Activated CD4-positive, alpha-beta T cell treated with anti-CD3 and anti-CD28 coated beads for 36 hours (primary cell): ENCODE measurements at regions of chr4 and their contacts with region 1.

Region 1: GRCh38 chr4:183504064-183504929 is 561 bp upstream of the ING2 start:
- DNase-seq: peak; percentile 99
- ATAC-seq: peak; percentile 80
- H3K4me3 Mint-ChIP-seq: peak overlapping the region; percentile 85
- H3K27ac Mint-ChIP-seq: peak overlapping the region; percentile 95
- H3K4me1 Mint-ChIP-seq: peaks cover 33% of the 10 kb centered on the region
- H3K27me3 Mint-ChIP-seq: no peaks in the 10 kb centered on the region

Region 2: DNA sequence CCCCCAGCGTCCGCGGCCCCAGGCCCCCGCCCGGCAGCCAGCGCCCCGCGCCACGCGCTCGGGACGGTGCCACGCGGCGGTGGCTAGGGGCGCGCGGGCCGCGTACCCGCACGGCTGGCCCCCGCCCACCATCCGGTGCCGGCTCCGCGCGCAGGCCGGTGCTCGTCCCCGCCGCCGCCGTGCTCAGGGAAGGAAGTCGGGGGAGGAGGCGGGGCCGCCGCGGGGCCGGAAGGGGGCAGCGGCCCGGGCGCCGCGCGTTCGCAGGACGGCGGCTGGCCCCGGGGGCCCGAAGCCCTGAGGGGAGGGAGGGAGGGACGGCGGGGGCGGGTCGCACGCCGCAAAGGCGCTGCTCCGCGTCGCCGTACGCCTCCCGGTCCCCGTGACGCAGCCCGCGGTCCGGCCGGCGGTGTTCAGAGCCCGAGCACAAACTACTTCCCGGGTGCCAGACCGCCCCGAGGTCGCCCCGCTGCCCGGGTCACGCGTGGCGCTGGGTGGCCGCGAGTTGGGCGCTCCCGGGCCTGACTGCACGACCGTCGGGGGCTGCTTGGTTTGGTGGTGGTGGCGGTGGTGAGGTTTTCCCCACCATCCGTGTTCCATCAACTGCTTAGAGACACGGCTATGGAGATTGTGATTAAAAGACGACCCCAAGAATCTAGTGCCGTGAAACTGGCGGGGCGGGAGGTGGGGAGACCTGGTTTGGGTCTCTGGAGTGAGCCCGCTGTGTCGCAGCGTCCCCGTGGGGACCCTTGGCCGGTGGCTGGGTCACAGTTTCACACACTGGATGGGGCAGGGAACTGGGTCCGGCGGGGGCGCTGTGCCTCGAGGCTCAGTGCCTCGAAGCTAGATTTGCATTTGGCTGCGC is 586.9 kb before region 1 on chr4 and contains the start of gene DCTD:
- CTCF ChIA-PET with region 1: no interaction called
- POLR2A ChIA-PET with region 1: interaction called, 3 read pairs
- intact Hi-C with region 1: loop called (anchors 1 to 5 kb)
- DNase-seq: peak; percentile 89
- ATAC-seq: peak; percentile 69
- H3K4me3 Mint-ChIP-seq: peak within 1 kb of the TSS; percentile 79
- H3K27ac Mint-ChIP-seq: peak within 1 kb of the TSS; percentile 95
- H3K4me1 Mint-ChIP-seq: peaks cover 48% of the 10 kb centered on the region
- H3K27me3 Mint-ChIP-seq: no peaks in the 10 kb centered on the region
- total RNA-seq, gene DCTD: 119 to 128 TPM

Region 3: GRCh38 chr4:183106839-183107238 is 397.5 kb before region 1 on chr4:
- CTCF ChIA-PET with region 1: no interaction called
- POLR2A ChIA-PET with region 1: no interaction called
- intact Hi-C with region 1: no loop called
- DNase-seq: no peak
- ATAC-seq: no peak
- H3K4me3 Mint-ChIP-seq: no peak overlapping the region
- H3K27ac Mint-ChIP-seq: no peak overlapping the region
- H3K4me1 Mint-ChIP-seq: no peaks in the 10 kb centered on the region
- H3K27me3 Mint-ChIP-seq: peaks cover 17% of the 10 kb centered on the region

Region 4: GRCh38 chr4:183444214-183445066 is 59.9 kb before region 1 on chr4 and contains the start of gene CDKN2AIP:
- CTCF ChIA-PET with region 1: interaction called, 3 read pairs
- POLR2A ChIA-PET with region 1: interaction called, 6 read pairs
- intact Hi-C with region 1: loop called (anchors 1 kb)
- DNase-seq: peak; percentile 95
- ATAC-seq: peak; percentile 87
- H3K4me3 Mint-ChIP-seq: peak within 1 kb of the TSS; percentile 97
- H3K27ac Mint-ChIP-seq: peak within 1 kb of the TSS; percentile 97
- H3K4me1 Mint-ChIP-seq: peaks cover 42% of the 10 kb centered on the region
- H3K27me3 Mint-ChIP-seq: no peaks in the 10 kb centered on the region
- total RNA-seq, gene CDKN2AIP: 19.4 to 22.8 TPM

Region 5: DNA sequence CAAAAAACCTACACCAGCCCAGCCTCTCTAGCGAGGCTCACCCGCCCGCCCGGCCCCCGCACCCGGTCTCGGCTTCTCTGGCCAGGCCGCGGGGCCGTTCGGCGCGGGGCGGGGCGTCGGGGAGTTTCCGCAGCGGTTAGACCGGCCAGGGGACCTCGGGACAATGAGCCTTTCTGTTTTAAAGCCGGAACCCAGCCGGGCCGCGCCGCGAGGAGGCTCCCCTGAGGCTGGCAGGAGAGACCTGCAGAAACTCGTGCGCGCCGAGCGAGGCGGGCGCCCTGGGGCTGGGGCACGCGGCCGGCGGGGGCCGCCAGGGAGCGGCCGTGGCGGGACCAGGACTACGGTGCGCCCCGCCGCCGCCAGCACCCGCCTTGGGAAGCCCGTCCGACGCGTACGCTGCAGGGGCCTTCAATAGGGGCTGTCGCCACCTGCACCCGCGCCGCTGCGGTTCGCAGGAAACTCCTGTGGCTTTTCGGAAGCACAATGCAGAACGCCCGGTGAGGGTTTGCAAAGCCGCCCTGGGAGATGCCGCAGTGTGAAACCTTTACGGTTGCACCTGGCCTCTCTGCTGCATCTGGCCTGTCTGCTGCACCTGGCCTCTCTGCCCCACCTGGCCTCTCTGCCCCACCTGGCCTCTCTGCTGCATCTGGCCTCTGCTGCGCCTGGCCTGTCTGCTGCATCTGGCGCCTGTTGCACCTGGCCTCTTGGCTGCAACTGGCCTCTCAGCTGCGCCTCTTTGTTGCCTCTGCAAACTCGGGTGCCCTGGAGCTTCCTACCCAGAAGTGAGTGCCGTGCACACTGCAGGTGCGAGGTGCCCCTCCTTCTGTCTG is 218.6 kb after region 1 on chr4:
- CTCF ChIA-PET with region 1: no interaction called
- POLR2A ChIA-PET with region 1: interaction called, 5 read pairs
- intact Hi-C with region 1: loop called in 1 of 2 experiments (anchors 10 kb)
- DNase-seq: peak; percentile 60
- ATAC-seq: peak; percentile 57
- H3K4me3 Mint-ChIP-seq: peak overlapping the region; percentile 56
- H3K27ac Mint-ChIP-seq: peak overlapping the region; percentile 10
- H3K4me1 Mint-ChIP-seq: peaks cover 12% of the 10 kb centered on the region
- H3K27me3 Mint-ChIP-seq: no peaks in the 10 kb centered on the region

Region 6: DNA sequence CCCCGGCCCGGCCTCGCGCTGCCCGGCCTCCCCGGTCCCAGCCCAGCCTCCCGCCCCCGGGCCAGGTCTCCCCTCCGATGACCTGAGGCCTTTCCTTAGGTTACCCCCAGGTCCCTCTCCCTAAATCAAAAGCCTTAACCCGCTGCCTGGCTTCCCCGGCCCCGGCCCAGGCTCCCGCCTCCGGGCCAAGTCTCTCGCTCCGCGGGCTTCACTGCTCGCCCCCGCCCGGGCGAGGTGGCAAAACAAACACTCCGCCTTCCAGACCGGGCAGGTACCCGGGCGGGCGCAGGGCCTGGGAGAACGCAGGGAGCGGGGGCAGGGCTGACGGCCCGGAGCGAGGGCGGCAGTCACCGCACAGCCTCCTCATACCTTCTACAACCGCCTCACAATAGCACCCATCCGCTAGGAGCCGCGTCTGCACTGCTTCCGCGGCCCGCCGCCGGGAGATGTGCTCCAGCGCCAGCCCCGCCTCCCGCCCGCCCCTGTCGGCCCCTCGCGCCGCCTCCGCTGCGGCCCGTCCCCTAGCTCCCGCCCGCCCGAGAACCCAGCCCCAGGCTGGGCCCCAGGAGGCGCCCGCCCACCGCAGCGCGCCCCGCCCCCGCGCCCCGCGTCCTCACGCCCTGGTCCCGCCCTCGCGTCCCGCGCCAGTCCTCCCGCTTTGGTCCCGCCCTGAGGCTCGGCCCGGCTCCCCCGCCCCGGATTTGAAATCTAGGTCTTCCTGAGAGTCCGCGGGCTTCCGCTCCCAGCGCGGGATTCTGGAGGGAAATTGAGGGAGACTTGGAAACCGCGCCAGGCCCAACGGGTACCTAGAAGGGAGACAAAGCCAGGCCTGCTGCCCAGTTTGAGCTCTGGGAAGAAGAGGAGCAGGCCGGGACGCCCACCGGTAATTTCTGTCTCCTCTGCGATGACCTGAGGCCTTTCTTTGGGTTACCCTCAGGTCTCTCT is 1145.0 kb after region 1 on chr4 and contains the starts of genes CASP3 and PRIMPOL:
- CTCF ChIA-PET with region 1: no interaction called
- POLR2A ChIA-PET with region 1: no interaction called
- intact Hi-C with region 1: loop called in 1 of 2 experiments (anchors 1 kb)
- DNase-seq: peak; percentile 98
- ATAC-seq: peak; percentile 88
- H3K4me3 Mint-ChIP-seq: peak within 1 kb of the TSS; percentile 94
- H3K27ac Mint-ChIP-seq: peak within 1 kb of the TSS; percentile 95
- H3K4me1 Mint-ChIP-seq: peaks cover 51% of the 10 kb centered on the region
- H3K27me3 Mint-ChIP-seq: no peaks in the 10 kb centered on the region
- total RNA-seq, gene CASP3: 44.3 to 65.7 TPM
- total RNA-seq, gene PRIMPOL: 20.4 to 24.3 TPM

Region 7: DNA sequence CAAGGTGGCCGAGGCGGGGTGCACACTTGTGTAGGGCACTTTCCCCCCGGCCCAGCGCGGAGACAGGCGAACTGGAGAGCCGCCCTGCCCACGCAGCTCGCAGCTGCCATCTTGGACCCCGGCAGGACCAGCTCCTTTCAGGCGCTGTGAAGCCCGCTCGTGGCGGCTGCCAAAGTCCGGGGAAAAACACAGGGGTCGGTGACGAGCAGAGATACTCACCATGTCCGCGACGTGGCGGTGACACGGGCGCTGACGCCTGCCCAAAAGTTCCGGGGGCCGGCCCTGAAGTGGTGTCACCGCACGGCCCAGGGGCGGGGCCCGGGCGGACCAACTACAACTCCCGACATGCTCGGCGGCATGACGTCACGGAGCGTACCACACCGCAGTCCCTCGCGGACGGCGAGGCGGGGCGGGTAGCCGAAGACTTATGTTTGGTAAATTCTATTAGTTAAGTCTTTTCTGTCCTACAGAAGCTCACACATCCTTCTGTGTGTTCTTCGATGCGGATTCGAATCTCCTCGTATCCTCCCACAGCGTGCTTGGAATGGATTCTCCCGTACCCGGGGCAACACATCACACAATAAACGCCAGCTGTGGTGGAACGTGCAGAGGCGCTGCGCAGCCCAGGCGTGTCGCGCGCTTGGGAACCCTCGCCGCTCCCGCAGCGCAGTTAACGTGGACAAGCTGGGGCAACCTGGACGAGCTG is 1921.5 kb after region 1 on chr4 and contains the start of gene UFSP2:
- CTCF ChIA-PET with region 1: no interaction called
- POLR2A ChIA-PET with region 1: no interaction called
- intact Hi-C with region 1: loop called in 1 of 2 experiments (anchors 2 kb)
- DNase-seq: peak; percentile 93
- ATAC-seq: peak; percentile 91
- H3K4me3 Mint-ChIP-seq: peak within 1 kb of the TSS; percentile 83
- H3K27ac Mint-ChIP-seq: peak within 1 kb of the TSS; percentile 90
- H3K4me1 Mint-ChIP-seq: peaks cover 30% of the 10 kb centered on the region
- H3K27me3 Mint-ChIP-seq: peaks cover 2% of the 10 kb centered on the region
- total RNA-seq, gene UFSP2: 27.3 to 40.3 TPM